ENCODE measurements at regions of chr12 and their contacts with region 1.

Region 1: DNA sequence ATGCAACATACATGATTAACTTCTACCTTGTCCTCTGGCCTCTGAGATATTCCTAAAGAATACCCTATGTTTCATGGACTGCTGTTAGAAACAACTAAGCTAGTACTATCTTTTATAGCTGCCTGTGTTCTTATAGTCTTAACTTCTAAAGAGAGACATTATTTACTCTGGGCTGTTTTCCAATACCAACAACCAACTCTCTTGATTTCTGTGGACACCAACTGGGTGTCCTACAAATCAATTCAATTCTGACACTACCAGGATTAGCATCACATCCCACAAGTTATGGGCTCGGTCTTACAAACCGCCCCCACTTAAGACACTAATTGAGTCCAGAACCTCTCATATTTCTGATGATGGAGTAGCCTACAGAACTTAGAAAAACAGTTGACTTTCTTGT is 8.3 kb downstream of the XPOT start:
- DNase-seq: no peak
- H3K4me3 ChIP-seq: no peak overlapping the region
- H3K27ac ChIP-seq: no peak overlapping the region
- H3K4me1 ChIP-seq: no peaks in the 10 kb centered on the region
- H3K27me3 ChIP-seq: no peaks in the 10 kb centered on the region
- CTCF ChIP-seq: no peak

Region 2: DNA sequence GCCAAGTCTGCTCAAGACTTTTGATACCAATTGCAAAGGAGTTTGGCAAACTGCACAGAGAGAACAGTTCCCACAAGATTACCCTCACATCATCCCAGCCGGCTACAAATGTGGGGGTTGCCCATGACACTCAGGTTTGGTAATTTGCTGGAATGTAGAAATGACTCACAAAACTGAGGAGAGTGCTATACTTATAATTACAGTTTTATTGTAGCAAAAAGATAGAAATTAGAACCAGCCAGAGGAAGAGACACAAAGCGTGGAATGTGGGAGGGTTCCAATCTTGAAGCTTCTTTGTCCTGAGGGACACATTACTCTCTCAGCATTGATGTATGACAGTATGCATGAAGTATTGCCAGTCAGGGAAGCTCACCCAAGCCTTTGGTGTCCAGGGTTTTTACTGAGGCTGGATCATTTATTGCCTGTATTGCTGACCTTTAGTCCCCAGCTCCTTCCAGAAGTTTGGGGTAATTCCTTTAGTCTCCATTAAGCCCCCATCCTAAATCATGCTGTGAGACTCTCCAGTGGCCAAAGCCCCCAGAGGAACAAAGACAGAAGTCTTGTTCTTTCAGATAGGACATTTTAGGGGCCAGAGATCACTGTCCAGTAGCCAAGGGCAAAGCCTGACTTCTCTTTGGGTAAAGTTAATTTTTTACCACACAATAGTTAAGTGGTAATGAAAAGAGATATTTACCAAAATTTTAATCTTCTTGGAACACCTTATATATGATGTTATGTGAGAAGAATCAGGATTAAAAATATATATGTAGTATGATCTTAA is 49.4 kb after region 1 on chr12:
- intact Hi-C with region 1: loop called (anchors 10 kb)
- DNase-seq: no peak
- H3K4me3 ChIP-seq: no peak overlapping the region
- H3K27ac ChIP-seq: no peak overlapping the region
- H3K4me1 ChIP-seq: no peaks in the 10 kb centered on the region
- H3K27me3 ChIP-seq: no peaks in the 10 kb centered on the region
- CTCF ChIP-seq: no peak

Region 3: DNA sequence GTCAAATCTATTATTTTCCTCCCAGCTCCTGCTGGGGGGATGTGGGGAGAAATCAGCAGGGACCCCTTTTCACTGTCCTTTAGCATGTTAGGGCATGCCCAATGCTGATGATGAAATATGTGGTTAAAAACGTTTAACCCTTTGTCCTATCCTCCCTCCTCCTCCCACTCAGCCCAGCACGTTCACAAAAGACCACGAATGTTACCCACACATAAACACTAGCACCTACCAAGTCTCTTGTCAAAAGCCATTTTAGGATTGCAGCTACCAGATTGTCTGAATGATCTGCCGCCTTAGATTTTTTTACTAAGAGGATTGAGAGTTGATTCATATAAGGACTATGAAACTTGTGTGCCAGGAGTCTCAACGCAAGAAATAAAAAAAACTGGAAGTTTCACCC is 109.9 kb after region 1 on chr12:
- intact Hi-C with region 1: no loop called
- DNase-seq: no peak
- H3K4me3 ChIP-seq: no peak overlapping the region
- H3K27ac ChIP-seq: no peak overlapping the region
- H3K4me1 ChIP-seq: no peaks in the 10 kb centered on the region
- H3K27me3 ChIP-seq: no peaks in the 10 kb centered on the region
- CTCF ChIP-seq: no peak

Region 4: DNA sequence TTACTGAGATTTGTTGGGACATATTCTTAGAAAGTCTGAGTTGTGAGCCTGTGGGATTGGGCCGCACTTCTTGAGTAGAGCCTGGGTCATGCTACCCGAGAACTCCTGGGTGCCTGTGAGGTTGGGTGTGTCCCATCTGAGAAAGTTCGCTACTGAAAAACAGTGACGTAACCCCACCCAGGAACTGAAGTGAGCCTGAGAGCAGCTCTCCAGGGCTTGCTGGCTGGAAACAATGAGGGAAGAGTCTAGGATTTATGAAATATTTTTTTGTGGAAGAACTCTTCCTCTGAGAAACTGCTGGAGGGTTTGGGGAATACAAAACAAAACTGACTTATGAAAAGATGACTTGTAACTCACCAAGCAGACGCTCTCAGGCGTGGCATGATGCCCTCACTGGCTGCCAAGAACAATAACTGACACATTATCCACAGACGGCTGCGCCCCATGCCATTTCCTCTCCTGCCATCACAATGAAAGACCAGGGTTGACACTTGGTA is 267.1 kb after region 1 on chr12:
- intact Hi-C with region 1: no loop called
- DNase-seq: peak; percentile 80
- H3K4me3 ChIP-seq: no peak overlapping the region
- H3K27ac ChIP-seq: peak overlapping the region; percentile 88
- H3K4me1 ChIP-seq: peaks cover 31% of the 10 kb centered on the region
- H3K27me3 ChIP-seq: no peaks in the 10 kb centered on the region
- CTCF ChIP-seq: no peak

Measured in colonic mucosa (tissue), 4 donors.